ENCODE measurements at regions of chr3 and their contacts with region 1.

Region 1: DNA sequence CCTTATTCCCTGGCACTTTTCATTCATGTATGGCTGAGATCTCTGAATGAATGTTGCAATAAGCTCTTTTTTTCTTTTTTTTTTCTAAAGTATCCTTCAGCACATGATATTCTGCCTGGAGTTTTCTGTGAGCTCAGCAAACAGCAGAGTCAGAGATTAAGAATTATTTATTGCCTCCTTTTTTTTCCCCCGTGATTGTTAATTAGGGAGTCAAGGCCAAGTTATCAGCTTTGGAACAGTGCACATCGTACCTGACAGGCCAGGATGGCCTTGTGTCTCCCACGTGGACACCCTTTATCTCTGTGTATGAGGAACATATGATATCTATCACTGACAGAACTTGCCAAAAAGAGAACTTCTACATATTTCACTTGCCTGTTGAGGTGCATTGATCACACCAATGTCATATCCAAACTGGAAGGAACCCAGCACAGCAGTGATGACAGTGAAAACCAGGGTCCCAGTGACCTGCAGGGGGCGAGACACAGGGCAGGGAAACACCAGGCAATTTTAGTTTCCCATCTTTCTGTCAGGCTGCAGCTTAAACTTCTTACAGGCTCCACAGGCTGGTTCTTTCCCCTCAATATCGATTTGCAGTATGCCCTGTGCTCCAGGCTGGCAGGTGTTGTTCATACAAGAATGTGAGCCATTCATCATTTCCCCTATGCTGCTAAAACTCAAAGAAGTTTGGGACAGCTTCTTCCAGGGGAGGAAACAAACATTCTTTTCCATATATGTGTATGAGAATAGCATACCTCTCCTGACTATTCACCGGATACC is 8.2 kb downstream of the SLC2A2 start:
- DNase-seq: no peak
- ATAC-seq: peak; percentile 29; the same call in 1 of the 2 replicates
- H3K4me3 ChIP-seq: no peak overlapping the region
- H3K27ac ChIP-seq: no peak overlapping the region
- H3K4me1 ChIP-seq: no peaks in the 10 kb centered on the region
- H3K27me3 ChIP-seq: no peaks in the 10 kb centered on the region
- CTCF ChIP-seq: peak; percentile 22; the same call in 1 of the 2 replicates
- POLR2A ChIP-seq: no peak
- RAD21 ChIP-seq: no peak

Region 2: DNA sequence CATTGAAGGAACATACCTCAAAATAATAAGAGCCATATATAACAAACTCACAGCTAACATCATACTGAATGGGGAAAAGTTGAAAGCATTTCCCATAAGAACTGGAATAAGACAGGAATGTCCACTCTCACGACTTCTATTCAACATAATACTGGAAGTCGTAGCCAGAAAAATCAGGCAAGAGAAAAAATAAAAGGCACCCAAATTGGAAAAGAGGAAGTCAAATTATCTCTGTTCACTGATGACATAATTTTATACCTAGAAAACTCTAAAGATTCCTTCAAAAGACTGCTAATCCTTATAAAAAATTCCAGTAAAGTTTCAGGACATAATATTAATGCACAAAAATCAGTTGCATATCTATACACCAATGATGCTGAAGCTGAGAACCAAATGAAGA is 26.7 kb before region 1 on chr3:
- CTCF ChIA-PET with region 1: no interaction called
- POLR2A ChIA-PET with region 1: no interaction called
- dilution Hi-C with region 1: no loop called
- in situ Hi-C with region 1: no loop called
- intact Hi-C with region 1: loop called (anchors 2 kb)
- DNase-seq: no peak
- ATAC-seq: no peak
- H3K4me3 ChIP-seq: no peak overlapping the region
- H3K27ac ChIP-seq: no peak overlapping the region
- H3K4me1 ChIP-seq: no peaks in the 10 kb centered on the region
- H3K27me3 ChIP-seq: no peaks in the 10 kb centered on the region
- CTCF ChIP-seq: no peak
- POLR2A ChIP-seq: no peak
- RAD21 ChIP-seq: no peak

Measured in IMR-90 (cell line).